ENCODE measurements at regions of chr4 and their contacts with region 1.

Region 1: GRCh38 chr4:107989537-107990386 is at the start of gene HADH:
- DNase-seq: peak; percentile 97
- ATAC-seq: peak; percentile 98 to 100 (median 99)
- H3K4me3 ChIP-seq: peak within 1 kb of the TSS; percentile 63
- H3K4me3 Mint-ChIP-seq: peak within 1 kb of the TSS; percentile 89
- H3K27ac ChIP-seq: peak within 1 kb of the TSS; percentile 64
- H3K27ac Mint-ChIP-seq: peak within 1 kb of the TSS; percentile 89 to 94
- H3K4me1 ChIP-seq: peaks cover 10% of the 10 kb centered on the region
- H3K4me1 Mint-ChIP-seq: peaks cover 29 to 34% of the 10 kb centered on the region in 2 donors
- H3K27me3 ChIP-seq: no peaks in the 10 kb centered on the region
- H3K27me3 Mint-ChIP-seq: no peaks in the 10 kb centered on the region
- CTCF ChIP-seq: no peak
- total RNA-seq, gene HADH: 9.1 to 16.5 (median 14.4) TPM

Region 2: DNA sequence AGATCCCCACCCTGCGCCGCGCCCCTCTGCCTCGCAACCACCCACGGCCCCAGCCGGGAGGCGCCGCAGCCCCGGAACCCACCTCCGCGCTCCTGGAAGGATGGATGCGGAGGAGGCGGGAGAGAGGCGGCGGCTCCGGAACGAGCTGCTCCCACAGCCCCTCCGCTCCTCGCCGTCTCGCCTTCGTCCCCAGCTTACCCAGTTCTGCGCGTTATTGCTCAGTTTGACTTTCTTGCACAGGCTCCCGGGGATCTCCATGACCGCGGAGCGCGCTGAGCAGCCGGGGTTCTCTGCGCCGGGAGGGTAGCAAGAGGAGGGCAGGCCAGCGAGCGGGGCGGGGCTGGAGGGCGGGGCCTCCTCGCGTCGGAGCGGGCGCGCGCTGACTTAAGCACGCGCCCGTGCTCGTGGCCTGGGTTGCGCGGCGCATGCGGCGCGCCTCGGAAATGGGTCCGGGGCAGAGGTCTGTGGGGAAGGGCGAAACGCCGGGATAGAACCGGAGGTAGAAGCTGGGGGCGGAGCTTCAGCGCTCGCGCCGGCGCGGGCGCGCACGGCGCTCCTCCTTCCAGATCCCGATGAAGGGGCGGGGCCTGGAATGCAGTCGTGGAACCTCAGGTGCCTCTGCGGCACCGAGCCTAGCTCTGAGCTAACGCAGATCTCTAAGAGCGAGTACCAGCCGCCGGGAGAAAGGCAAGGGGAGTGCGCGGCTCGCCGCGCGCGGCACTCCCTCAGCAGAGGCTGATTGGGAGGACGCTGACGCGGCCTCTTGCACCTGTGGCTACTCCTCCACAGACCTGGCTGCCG is 269.6 kb before region 1 on chr4 and contains the start of gene PAPSS1:
- intact Hi-C with region 1: loop called (anchors 5 kb)
- DNase-seq: peak; percentile 91 to 99
- ATAC-seq: peak; percentile 86 to 98 (median 90)
- H3K4me3 ChIP-seq: peak within 1 kb of the TSS; percentile 76
- H3K4me3 Mint-ChIP-seq: peak within 1 kb of the TSS; percentile 97
- H3K27ac ChIP-seq: peak within 1 kb of the TSS; percentile 75
- H3K27ac Mint-ChIP-seq: peak within 1 kb of the TSS; percentile 90 to 95
- H3K4me1 ChIP-seq: peaks cover 18% of the 10 kb centered on the region
- H3K4me1 Mint-ChIP-seq: peaks cover 29 to 37% of the 10 kb centered on the region in 2 donors
- H3K27me3 ChIP-seq: no peaks in the 10 kb centered on the region
- H3K27me3 Mint-ChIP-seq: peaks cover 4 to 5% of the 10 kb centered on the region in 2 donors
- CTCF ChIP-seq: no peak
- total RNA-seq, gene PAPSS1: 10.2 to 21.3 (median 12.9) TPM

Region 3: GRCh38 chr4:108008721-108009120 is 19.0 kb after region 1 on chr4:
- intact Hi-C with region 1: no loop called
- DNase-seq: no peak
- ATAC-seq: no peak
- H3K4me3 ChIP-seq: no peak overlapping the region
- H3K4me3 Mint-ChIP-seq: no peak overlapping the region
- H3K27ac ChIP-seq: no peak overlapping the region
- H3K27ac Mint-ChIP-seq: no peak overlapping the region
- H3K4me1 ChIP-seq: peaks cover 3% of the 10 kb centered on the region
- H3K4me1 Mint-ChIP-seq: peaks cover 10 to 24% of the 10 kb centered on the region in 2 donors
- H3K27me3 ChIP-seq: no peaks in the 10 kb centered on the region
- H3K27me3 Mint-ChIP-seq: no peaks in the 10 kb centered on the region
- CTCF ChIP-seq: no peak

Region 4: DNA sequence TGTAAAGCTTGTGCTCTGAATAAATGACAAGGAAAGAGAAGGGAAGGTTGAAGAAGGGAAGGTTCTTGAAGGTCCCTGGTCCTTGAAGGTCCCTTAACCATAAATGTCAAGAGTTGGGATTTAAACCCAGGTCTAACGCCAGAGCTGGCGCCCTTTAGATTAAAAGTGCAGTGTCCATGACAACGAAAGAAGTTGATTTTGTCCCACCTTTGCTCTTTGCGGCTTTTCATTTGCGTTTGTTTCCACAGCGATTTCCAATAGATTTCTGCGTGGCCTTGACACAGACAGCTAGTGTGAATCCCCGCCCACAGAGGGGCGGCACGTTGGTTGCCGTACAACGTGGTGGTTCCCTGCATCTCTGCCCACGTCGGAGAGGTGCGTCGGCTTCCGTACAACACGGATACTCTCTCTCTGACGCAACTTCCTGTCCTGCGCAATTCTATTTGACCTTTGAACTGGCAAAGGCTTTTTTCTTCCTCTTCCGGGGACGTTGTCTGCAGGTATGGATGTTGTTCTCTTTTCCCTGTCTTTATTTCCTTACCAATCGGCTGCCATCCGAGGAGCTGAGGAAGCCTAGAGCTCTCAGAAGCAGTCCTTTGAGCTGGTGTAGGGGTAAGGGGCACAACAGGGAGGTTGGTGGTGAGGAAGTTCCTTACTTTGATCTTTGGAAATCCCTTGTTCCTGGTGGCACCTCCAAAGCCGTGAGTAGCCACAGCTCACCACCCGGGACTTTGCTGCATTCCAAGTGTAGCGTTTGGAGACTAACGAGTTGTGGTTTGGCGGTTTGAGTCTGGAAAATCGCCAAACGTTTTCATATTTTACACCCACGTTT is 630.6 kb after region 1 on chr4 and contains the start of gene RPL34:
- intact Hi-C with region 1: loop called (anchors 1 kb)
- DNase-seq: peak; percentile 93 to 100
- ATAC-seq: peak; percentile 99 to 100 (median 100)
- H3K4me3 ChIP-seq: peak within 1 kb of the TSS; percentile 78
- H3K4me3 Mint-ChIP-seq: peak within 1 kb of the TSS; percentile 88
- H3K27ac ChIP-seq: peak within 1 kb of the TSS; percentile 83
- H3K27ac Mint-ChIP-seq: peak within 1 kb of the TSS; percentile 94 to 96
- H3K4me1 ChIP-seq: peaks cover 12% of the 10 kb centered on the region
- H3K4me1 Mint-ChIP-seq: peaks cover 31 to 45% of the 10 kb centered on the region in 2 donors
- H3K27me3 ChIP-seq: no peaks in the 10 kb centered on the region
- H3K27me3 Mint-ChIP-seq: no peaks in the 10 kb centered on the region
- CTCF ChIP-seq: no peak
- total RNA-seq, gene RPL34: 1,002 to 1,285 (median 1,229) TPM